Activated T-helper 1 cell treated with anti-CD3 and anti-CD28 coated beads, Interleukin-12 subunit alpha, Interleukin-12 subunit beta, Interleukin-2, Interleukin-4 antibody, amounts not matched to agents 30 ng/mL and 10 ng/mL and 1 ng/mL, durations not matched to agents 14 hours and 24 hours and 36 hours (primary cell): ENCODE measurements at regions of chr1 and their contacts with region 1.

Region 1: DNA sequence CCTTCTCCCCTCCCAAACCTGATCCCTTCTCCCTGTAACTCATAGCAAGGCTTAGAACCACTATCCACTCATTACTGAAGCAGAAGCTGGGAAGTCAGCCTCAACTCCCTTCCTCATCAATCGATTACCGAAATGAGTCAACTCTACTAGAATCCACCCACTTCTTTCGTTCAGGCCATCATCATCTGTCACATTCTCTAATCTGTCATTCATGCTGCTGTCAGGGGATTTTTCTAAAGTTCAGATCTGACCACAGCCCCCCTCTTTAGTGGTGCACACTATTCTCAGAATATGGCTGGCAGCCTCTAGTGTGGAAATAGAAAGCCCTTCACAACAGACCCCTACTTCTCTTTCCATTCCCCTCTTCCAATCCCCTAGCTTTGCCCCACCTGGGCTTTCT is 5.1 kb downstream of the NT5C1A start:
- DNase-seq: peak; percentile 46
- H3K4me3 Mint-ChIP-seq: peak overlapping the region; percentile 23
- H3K27ac Mint-ChIP-seq: peak overlapping the region; percentile 62
- H3K4me1 Mint-ChIP-seq: peaks cover 38% of the 10 kb centered on the region
- H3K27me3 Mint-ChIP-seq: peaks cover 9% of the 10 kb centered on the region

Region 2: DNA sequence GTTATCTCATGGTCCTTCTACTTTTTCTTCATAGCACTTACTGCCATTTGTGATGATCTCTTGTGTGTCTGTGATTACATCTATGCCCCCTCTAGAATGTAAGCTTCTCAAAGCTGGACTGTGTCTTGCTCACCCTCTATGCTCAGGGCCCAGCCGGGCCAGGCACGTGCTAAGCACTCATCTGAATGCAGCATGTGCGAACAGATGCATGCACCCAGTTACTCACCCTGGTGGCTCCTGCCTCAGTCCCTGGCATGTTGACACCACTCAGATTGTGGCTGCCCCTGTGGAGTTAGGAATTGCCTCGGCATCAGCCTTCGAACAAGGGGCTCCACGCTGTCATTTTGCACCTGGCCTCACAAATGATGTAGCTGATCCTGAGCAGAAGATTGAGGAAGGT is 70.6 kb before region 1 on chr1:
- intact Hi-C with region 1: loop called (anchors 1 kb)
- DNase-seq: no peak
- H3K4me3 Mint-ChIP-seq: no peak overlapping the region
- H3K27ac Mint-ChIP-seq: no peak overlapping the region
- H3K4me1 Mint-ChIP-seq: peaks cover 15% of the 10 kb centered on the region
- H3K27me3 Mint-ChIP-seq: peaks cover 2% of the 10 kb centered on the region

Region 3: DNA sequence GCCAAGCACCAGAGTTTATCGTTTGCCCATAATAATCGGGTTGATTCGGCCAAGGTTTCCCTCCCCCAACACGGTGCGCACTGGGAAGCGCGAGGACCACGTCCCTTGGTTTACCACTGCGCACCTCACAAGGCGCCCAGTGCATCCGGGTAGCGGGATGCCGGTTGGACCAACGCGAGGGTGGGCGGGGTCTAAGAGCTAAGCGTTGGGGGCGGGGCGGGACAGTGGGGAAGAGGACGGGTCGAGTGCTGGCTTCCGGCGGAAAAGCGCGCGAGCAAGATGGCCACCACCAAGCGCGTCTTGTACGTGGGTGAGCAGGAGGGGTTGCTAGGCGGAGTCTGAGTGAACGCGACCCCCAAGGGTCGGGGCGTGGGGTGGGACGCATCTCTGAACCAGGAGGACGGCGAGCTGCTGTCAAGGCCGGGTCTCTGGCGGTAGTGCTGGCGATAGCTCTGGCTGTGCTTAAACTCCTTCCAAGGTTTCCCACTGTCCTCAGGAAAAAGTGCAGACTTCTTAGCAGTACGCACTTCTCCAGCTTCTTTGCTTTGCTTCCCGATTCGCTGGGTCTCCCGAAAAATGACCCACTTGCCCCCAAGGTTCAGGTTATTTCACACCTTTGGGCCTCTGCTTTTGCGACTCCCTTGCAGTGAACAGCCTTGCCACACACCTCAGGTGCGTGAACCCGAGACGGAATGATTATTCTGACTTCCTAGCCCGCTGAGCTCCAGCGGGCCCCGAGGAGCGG is 72.0 kb after region 1 on chr1 and contains the start of gene PPIE:
- intact Hi-C with region 1: loop called (anchors 2 kb)
- DNase-seq: peak; percentile 83
- H3K4me3 Mint-ChIP-seq: peak within 1 kb of the TSS; percentile 96
- H3K27ac Mint-ChIP-seq: peak within 1 kb of the TSS; percentile 93
- H3K4me1 Mint-ChIP-seq: peaks cover 67% of the 10 kb centered on the region
- H3K27me3 Mint-ChIP-seq: no peaks in the 10 kb centered on the region
- total RNA-seq, gene PPIE: 68.1 and 75.0 TPM in 2 replicates